ENCODE measurements at regions of chr19 and their contacts with region 1.

Region 1: GRCh38 chr19:2274931-2275535 is 6.9 kb downstream of the PEAK3 start:
- DNase-seq: peak in 1 of 2 donors; percentile 73
- ATAC-seq: peak in 1 of 2 donors; percentile 28
- H3K4me3 ChIP-seq: no peak overlapping the region
- H3K27ac ChIP-seq: peak overlapping the region; percentile 35 to 65 (median 54)
- H3K4me1 ChIP-seq: peaks cover 36 to 43% of the 10 kb centered on the region in 2 donors
- H3K27me3 ChIP-seq: no peaks in the 10 kb centered on the region
- CTCF ChIP-seq: peak; percentile 44 to 68 (median 53)
- POLR2A ChIP-seq: no peak

Region 2: DNA sequence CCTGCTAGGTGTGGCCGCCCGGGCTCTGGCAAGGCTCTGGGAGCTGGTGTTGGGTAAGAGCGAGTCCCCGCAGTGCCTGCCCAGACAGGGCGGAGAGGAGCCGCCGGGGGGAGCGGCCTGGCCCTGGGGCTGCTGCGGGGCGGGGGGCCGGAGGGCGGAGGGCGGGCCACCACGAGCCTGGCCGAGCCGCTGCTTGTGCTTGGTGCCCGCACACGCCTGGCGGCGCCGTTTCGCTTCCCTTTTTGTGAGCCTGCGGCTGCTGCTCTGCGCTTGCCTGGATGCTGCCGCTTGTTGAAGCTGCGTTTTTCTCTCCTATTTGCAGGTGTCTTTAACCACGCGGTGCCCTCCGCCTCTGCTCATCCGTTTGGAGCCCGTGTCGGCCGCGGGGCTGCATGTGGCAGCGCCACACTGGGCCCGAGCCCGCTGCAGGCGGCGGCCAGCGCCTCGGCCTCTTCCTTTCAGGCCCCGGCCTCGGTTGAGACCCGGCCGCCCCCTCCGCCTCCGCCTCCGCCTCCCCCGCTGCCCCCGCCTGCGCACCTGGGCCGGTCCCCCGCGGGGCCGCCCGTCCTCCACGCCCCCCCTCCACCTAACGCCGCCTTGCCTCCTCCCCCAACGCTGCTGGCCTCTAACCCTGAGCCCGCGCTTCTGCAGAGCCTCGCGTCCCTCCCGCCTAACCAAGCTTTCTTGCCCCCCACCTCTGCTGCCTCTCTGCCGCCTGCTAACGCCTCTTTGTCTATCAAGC is 47.4 kb before region 1 on chr19:
- in situ Hi-C with region 1: no loop called
- intact Hi-C with region 1: no loop called
- DNase-seq: no peak
- ATAC-seq: no peak
- H3K4me3 ChIP-seq: no peak overlapping the region
- H3K27ac ChIP-seq: no peak overlapping the region
- H3K4me1 ChIP-seq: peaks cover 13 to 30% of the 10 kb centered on the region in 2 donors
- H3K27me3 ChIP-seq: no peaks in the 10 kb centered on the region
- CTCF ChIP-seq: no peak
- POLR2A ChIP-seq: no peak

Region 3: GRCh38 chr19:2315818-2316353 is 40.9 kb after region 1 on chr19:
- in situ Hi-C with region 1: no loop called
- intact Hi-C with region 1: loop called (anchors 5 kb)
- DNase-seq: peak; percentile 49 to 52
- ATAC-seq: peak; percentile 58 to 60
- H3K4me3 ChIP-seq: no peak overlapping the region
- H3K27ac ChIP-seq: no peak overlapping the region
- H3K4me1 ChIP-seq: no peaks in the 10 kb centered on the region
- H3K27me3 ChIP-seq: peaks cover 6 to 14% (median 8%) of the 10 kb centered on the region in 3 donors
- CTCF ChIP-seq: peak; percentile 32 to 72 (median 52)
- POLR2A ChIP-seq: no peak

Region 4: GRCh38 chr19:2391118-2391725 is 116.2 kb after region 1 on chr19:
- in situ Hi-C with region 1: loop called (anchors 25 kb)
- intact Hi-C with region 1: loop called (anchors 5 kb)
- DNase-seq: no peak
- ATAC-seq: peak; percentile 63 to 67
- H3K4me3 ChIP-seq: no peak overlapping the region
- H3K27ac ChIP-seq: no peak overlapping the region
- H3K4me1 ChIP-seq: no peaks in the 10 kb centered on the region
- H3K27me3 ChIP-seq: peaks cover 0 to 3% (median 0%) of the 10 kb centered on the region in 3 donors
- CTCF ChIP-seq: peak; percentile 70 to 81 (median 75)
- POLR2A ChIP-seq: no peak

Measured in gastrocnemius medialis (tissue), 4 donors.